HCT116 (cell line): ENCODE measurements at regions of chr3 and their contacts with region 1.

Region 1: GRCh38 chr3:5122030-5122740 is at the start of gene ARL8B:
- DNase-seq: peak; percentile 78
- ATAC-seq: peak; percentile 96
- H3K4me3 ChIP-seq: peak within 1 kb of the TSS; percentile 96 to 98
- H3K27ac ChIP-seq: peak within 1 kb of the TSS; percentile 65
- H3K4me1 ChIP-seq: peaks cover 11 to 19% of the 10 kb centered on the region in 2 experiments
- H3K27me3 ChIP-seq: no peaks in the 10 kb centered on the region
- CTCF ChIP-seq: peak; percentile 91 to 96 (median 92)
- POLR2A ChIP-seq: peak; percentile 51
- RAD21 ChIP-seq: peak; percentile 63
- total RNA-seq, gene ARL8B: 38.1 TPM

Region 2: DNA sequence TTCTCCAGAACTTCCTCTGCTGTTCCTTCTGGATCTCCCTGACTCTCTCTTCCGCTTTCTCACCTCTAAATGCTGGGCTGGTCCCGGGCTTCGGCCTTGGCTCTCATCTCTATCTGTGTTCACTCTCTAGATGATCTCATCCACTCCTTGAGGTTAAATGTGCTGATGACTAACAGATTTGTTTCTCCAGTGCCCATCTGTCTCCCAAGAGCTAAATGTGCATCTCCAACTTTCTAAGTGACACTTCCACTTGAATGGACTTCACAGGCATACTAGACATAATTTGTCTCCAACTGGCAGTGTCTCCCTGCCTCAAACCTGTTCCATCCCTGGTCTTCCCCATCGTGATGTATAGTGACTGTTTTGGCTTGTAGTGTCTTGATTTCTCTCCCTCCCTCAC is 533.7 kb before region 1 on chr3:
- CTCF ChIA-PET with region 1: no interaction called
- POLR2A ChIA-PET with region 1: no interaction called
- RAD21 ChIA-PET with region 1: no interaction called
- intact Hi-C with region 1: no loop called
- DNase-seq: no peak
- ATAC-seq: no peak
- H3K4me3 ChIP-seq: no peak overlapping the region
- H3K27ac ChIP-seq: no peak overlapping the region
- H3K4me1 ChIP-seq: no peaks in the 10 kb centered on the region
- H3K27me3 ChIP-seq: no peaks in the 10 kb centered on the region; the same call in 1 of the 2 replicates
- CTCF ChIP-seq: no peak
- POLR2A ChIP-seq: no peak
- RAD21 ChIP-seq: no peak

Region 3: DNA sequence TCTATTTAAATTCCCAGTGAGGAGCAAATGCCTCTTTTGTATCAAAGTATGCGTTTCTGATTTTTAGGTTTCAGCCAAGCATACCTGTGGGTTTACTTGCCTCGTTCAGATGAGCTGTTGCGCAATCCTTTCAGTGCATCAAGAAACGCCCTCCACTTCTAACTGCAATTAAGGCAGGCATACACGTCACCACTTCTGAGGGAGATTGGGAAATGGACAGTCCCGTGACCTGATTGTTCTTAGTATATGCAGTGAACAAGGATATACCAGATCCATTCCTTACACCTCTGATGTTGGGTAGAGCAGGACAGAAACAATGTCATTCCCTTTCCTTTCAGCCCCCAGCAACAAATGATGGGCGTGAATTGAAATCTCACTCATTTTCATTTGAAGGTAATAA is 410.0 kb before region 1 on chr3:
- CTCF ChIA-PET with region 1: interaction called, 3 read pairs
- POLR2A ChIA-PET with region 1: no interaction called
- RAD21 ChIA-PET with region 1: no interaction called
- intact Hi-C with region 1: loop called (anchors 1 kb)
- DNase-seq: peak; percentile 21
- ATAC-seq: no peak
- H3K4me3 ChIP-seq: no peak overlapping the region
- H3K27ac ChIP-seq: no peak overlapping the region
- H3K4me1 ChIP-seq: peaks cover 8% of the 10 kb centered on the region in 2 experiments; a peak in 2 of 4 replicates
- H3K27me3 ChIP-seq: no peaks in the 10 kb centered on the region
- CTCF ChIP-seq: no peak
- POLR2A ChIP-seq: no peak
- RAD21 ChIP-seq: no peak

Region 4: GRCh38 chr3:5187156-5187919 is 65.2 kb after region 1 on chr3 and contains the start of gene EDEM1:
- CTCF ChIA-PET with region 1: no interaction called
- POLR2A ChIA-PET with region 1: no interaction called
- RAD21 ChIA-PET with region 1: no interaction called
- intact Hi-C with region 1: loop called (anchors 2 kb)
- DNase-seq: peak; percentile 86
- ATAC-seq: peak; percentile 96
- H3K4me3 ChIP-seq: peak within 1 kb of the TSS; percentile 65 to 88
- H3K27ac ChIP-seq: peak within 1 kb of the TSS; percentile 90
- H3K4me1 ChIP-seq: peaks cover 4 to 20% of the 10 kb centered on the region in 2 experiments
- H3K27me3 ChIP-seq: no peaks in the 10 kb centered on the region
- CTCF ChIP-seq: no peak
- POLR2A ChIP-seq: peak; percentile 36
- RAD21 ChIP-seq: no peak
- total RNA-seq, gene EDEM1: 23.7 TPM